Activated CD4-positive, alpha-beta T cell treated with anti-CD3 and anti-CD28 coated beads, Interleukin-2, amount 10 ng/mL, durations not matched to agents 24 days and 14 days (primary cell): ENCODE measurements at regions of chr12 and their contacts with region 1.

Region 1: GRCh38 chr12:48977315-48978281 is 524 bp upstream of the WNT1 start:
- DNase-seq: peak; percentile 94
- H3K4me3 Mint-ChIP-seq: peak overlapping the region; percentile 64
- H3K27ac Mint-ChIP-seq: peak overlapping the region; percentile 72
- H3K4me1 Mint-ChIP-seq: peaks cover 55% of the 10 kb centered on the region
- H3K27me3 Mint-ChIP-seq: peaks cover 88% of the 10 kb centered on the region

Region 2: GRCh38 chr12:48851883-48852733 is 125.5 kb before region 1 on chr12 and contains the start of gene DDX23:
- intact Hi-C with region 1: loop called (anchors 2 kb)
- DNase-seq: peak; percentile 97
- H3K4me3 Mint-ChIP-seq: peak within 1 kb of the TSS; percentile 84
- H3K27ac Mint-ChIP-seq: peak within 1 kb of the TSS; percentile 95
- H3K4me1 Mint-ChIP-seq: peaks cover 27% of the 10 kb centered on the region
- H3K27me3 Mint-ChIP-seq: no peaks in the 10 kb centered on the region
- total RNA-seq, gene DDX23: 122 and 126 TPM in 2 replicates

Region 3: GRCh38 chr12:48957141-48958048 is 20.2 kb before region 1 on chr12 and contains the start of gene ARF3:
- intact Hi-C with region 1: loop called (anchors 2 kb)
- DNase-seq: peak; percentile 98
- H3K4me3 Mint-ChIP-seq: peak within 1 kb of the TSS; percentile 92
- H3K27ac Mint-ChIP-seq: peak within 1 kb of the TSS; percentile 87
- H3K4me1 Mint-ChIP-seq: peaks cover 39% of the 10 kb centered on the region
- H3K27me3 Mint-ChIP-seq: peaks cover 18% of the 10 kb centered on the region
- total RNA-seq, gene ARF3: 109 and 112 TPM in 2 replicates

Region 4: GRCh38 chr12:48995061-48995879 is 17.7 kb after region 1 on chr12:
- intact Hi-C with region 1: loop called (anchors 1 kb)
- DNase-seq: peak; percentile 87
- H3K4me3 Mint-ChIP-seq: peak overlapping the region; percentile 25
- H3K27ac Mint-ChIP-seq: no peak overlapping the region
- H3K4me1 Mint-ChIP-seq: peaks cover 30% of the 10 kb centered on the region
- H3K27me3 Mint-ChIP-seq: peaks cover 54% of the 10 kb centered on the region

Region 5: GRCh38 chr12:49342066-49342913 is 364.7 kb after region 1 on chr12:
- intact Hi-C with region 1: loop called (anchors 5 kb)
- DNase-seq: peak; percentile 92
- H3K4me3 Mint-ChIP-seq: peak overlapping the region; percentile 68
- H3K27ac Mint-ChIP-seq: no peak overlapping the region
- H3K4me1 Mint-ChIP-seq: peaks cover 37% of the 10 kb centered on the region
- H3K27me3 Mint-ChIP-seq: peaks cover 84% of the 10 kb centered on the region